ENCODE measurements at regions of chr3 and their contacts with region 1.

Region 1: DNA sequence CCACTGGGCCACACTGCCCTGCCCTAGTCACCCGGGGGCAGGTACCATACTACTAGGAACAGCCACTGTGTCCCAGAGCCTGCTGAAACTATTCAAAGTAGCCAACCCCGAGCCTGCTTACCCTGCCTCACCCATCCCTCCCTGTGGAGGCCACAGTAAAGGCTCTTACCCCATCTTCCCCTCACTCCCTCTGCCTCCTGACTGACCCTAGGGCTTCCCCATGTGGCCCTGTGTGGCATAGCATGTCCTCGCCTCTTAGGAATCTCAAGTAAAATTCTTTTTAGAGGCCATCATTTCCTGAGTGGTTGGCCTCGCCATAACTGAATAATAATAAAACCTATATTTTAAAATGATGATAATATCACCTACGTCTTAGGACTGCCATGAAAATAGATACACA is 112.2 kb upstream of the SLC6A11 start:
- DNase-seq: peak; percentile 38
- ATAC-seq: peak; percentile 65
- H3K4me3 ChIP-seq: no peak overlapping the region
- H3K27ac ChIP-seq: no peak overlapping the region
- H3K4me1 ChIP-seq: peaks cover 0 to 13% of the 10 kb centered on the region in 2 experiments; a peak in 3 of 4 replicates
- H3K27me3 ChIP-seq: no peaks in the 10 kb centered on the region
- CTCF ChIP-seq: peak; percentile 46 to 63 (median 62); a peak in 5 of 6 replicates
- POLR2A ChIP-seq: no peak
- RAD21 ChIP-seq: peak; percentile 77

Region 2: DNA sequence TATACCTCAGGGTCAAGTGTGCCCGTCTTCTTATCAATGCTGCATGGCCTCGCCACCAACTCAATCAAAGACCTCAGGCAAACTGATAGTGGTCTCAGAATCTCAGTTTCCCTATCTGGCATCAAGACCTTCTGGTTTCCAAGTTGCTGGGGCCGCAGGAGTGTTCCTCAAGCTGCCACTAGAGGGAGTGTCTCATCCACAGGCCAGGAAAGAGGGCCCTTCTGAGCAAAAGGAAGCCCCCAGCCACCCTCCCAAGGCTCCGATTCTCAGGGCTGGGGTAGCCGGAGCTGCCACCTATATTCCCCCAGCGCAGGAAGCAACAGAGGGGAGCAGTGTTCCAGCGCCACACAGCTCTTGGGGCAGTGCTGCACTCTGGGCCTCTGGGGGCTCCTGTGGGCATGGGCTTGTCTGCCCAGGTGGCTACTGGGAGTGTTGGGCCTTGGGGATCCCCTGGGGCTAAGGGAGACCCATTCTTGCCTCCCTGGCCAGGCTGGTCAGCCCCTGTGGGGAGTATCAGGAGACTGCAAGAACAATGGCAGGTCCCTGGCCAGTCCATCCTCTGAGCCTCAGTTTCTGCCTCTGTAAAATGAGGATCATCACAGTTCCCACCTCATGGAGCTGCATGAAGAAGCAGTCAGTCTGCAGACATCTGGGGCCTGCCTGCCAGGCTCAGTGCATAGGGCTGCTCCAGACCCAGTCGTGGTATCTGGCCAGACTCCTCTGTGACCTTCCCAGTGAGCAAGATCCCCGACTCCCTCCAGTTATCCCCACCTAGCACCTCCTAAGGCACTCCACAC is 359.5 kb before region 1 on chr3:
- CTCF ChIA-PET with region 1: no interaction called
- POLR2A ChIA-PET with region 1: interaction called, 4 read pairs
- RAD21 ChIA-PET with region 1: no interaction called
- intact Hi-C with region 1: loop called (anchors 5 kb)
- DNase-seq: no peak
- ATAC-seq: peak; percentile 76
- H3K4me3 ChIP-seq: no peak overlapping the region
- H3K27ac ChIP-seq: no peak overlapping the region
- H3K4me1 ChIP-seq: no peaks in the 10 kb centered on the region
- H3K27me3 ChIP-seq: no peaks in the 10 kb centered on the region
- CTCF ChIP-seq: peak; percentile 80 to 97 (median 96); a peak in 5 of 6 replicates
- POLR2A ChIP-seq: no peak
- RAD21 ChIP-seq: peak; percentile 91

Region 3: DNA sequence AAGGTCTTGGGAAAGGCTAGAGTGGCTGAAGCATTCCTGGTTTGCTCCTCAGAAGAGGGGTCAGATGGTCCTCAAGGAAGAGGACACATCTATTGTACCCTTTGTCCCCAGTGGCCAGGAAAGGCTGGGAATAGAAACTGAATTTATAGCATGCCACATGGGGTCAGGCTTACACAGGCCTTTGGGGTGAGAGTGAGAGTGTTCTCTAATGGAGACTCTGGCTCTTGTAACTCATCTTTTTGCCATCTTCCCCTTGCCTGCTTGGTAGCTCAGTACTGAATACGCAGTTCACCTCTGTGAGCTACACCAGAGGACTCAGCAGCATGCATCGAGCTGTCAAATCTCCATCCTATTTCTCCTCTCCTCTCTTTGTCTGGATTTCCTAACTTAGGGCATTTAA is 286.0 kb before region 1 on chr3:
- CTCF ChIA-PET with region 1: interaction called, 4 read pairs
- POLR2A ChIA-PET with region 1: no interaction called
- RAD21 ChIA-PET with region 1: interaction called in 1 of 2 experiments, 3 read pairs
- intact Hi-C with region 1: loop called (anchors 10 kb)
- DNase-seq: peak; percentile 19
- ATAC-seq: peak; percentile 76
- H3K4me3 ChIP-seq: no peak overlapping the region
- H3K27ac ChIP-seq: no peak overlapping the region
- H3K4me1 ChIP-seq: no peaks in the 10 kb centered on the region
- H3K27me3 ChIP-seq: peaks cover 3% of the 10 kb centered on the region; the same call in 1 of the 2 replicates
- CTCF ChIP-seq: peak; percentile 28 to 80 (median 47); a peak in 5 of 6 replicates
- POLR2A ChIP-seq: no peak
- RAD21 ChIP-seq: peak; percentile 88

Region 4: GRCh38 chr3:10518506-10519150 is 185.2 kb before region 1 on chr3:
- CTCF ChIA-PET with region 1: no interaction called
- POLR2A ChIA-PET with region 1: no interaction called
- RAD21 ChIA-PET with region 1: no interaction called
- intact Hi-C with region 1: loop called (anchors 10 kb)
- DNase-seq: no peak
- ATAC-seq: no peak
- H3K4me3 ChIP-seq: no peak overlapping the region
- H3K27ac ChIP-seq: no peak overlapping the region
- H3K4me1 ChIP-seq: peaks cover 0 to 12% of the 10 kb centered on the region in 2 experiments; a peak in 2 of 4 replicates
- H3K27me3 ChIP-seq: peaks cover 24% of the 10 kb centered on the region
- CTCF ChIP-seq: no peak
- POLR2A ChIP-seq: no peak
- RAD21 ChIP-seq: no peak